ENCODE measurements at regions of chr1 and their contacts with region 1.

Region 1: DNA sequence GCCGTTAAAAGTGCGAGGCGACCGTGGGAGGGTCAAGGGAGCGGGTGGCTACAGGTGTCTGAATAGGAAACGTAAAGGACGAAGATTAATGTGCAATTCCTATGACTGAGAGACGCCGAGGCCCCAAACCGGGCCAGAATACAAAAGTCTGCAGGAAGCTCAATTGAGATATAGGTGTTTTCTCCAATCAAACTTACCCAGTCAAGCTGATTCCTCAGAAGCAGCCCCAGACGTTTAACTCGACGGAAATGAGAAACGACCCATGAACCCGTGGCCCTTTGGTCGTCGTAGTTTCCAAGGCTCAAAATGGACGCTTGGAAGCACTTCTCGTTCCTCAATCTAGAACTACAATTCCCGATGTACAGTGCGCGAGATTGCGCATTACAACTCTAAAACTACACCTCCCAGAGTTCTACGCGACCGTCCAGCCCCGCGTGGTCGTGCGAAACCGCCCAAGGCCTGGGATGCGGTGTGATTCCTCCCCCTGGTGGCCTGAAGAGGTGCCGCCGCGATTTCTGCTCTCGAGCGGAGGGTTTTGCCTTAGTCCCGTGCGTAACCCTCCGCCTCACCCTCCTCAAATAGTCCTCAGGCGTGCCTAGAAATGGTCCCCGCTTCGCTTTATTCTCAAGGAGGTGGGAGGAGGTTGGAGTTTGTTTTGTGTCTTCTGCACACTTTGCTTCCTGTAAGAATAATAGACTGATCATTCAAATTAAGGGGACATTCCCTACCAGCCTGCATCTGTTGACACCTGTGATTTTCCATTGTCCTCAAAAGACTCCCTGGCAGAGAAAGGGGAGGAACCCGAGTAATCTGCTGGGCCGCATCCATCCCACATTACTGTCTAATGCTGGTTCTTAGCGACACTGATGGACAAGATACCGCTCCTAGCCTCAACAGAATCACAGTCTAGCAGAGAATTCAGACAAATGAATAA is at the start of gene PAFAH2:
- DNase-seq: peak; percentile 96 to 99
- ATAC-seq: peak; percentile 99 to 100 (median 100)
- H3K4me3 ChIP-seq: peak within 1 kb of the TSS; percentile 34 to 88 (median 65)
- H3K27ac ChIP-seq: peak within 1 kb of the TSS; percentile 19 to 89 (median 86)
- H3K4me1 ChIP-seq: peaks cover 4 to 31% (median 19%) of the 10 kb centered on the region in 9 donors
- H3K27me3 ChIP-seq: no peaks in the 10 kb centered on the region
- CTCF ChIP-seq: peak; percentile 93 to 99 (median 98)
- total RNA-seq, gene PAFAH2: 7.5 to 19.3 (median 12.4) TPM

Region 2: DNA sequence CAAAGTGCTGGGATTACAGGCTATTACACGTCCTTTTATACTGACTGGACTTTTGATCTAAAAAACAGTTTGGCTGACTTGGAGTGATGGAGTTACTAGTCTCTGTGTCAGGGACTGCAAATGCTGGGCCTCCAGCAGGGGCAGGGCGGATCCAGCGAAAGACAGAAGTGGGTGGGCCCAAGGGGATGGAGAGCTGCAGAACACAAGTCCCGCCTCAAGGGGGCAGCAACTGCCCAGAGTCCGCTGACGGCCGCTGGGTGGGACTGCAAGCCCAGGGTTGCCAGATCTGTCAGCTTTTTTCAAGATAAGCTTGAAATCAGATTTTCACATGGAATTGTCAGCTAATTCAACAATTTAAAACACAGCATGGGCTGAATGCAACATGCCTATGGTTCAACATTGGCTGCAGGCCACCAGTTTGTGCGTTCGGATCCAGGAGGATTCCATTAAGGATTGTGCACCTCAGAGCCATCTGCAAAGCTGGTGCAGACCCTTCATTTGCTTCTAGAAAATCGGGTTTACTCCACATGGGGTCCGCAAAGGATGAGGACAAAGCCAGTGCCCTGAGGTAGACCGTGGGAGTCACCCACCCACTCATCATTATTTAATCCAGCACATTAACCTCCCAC is 102.6 kb before region 1 on chr1:
- intact Hi-C with region 1: loop called (anchors 1 to 5 kb)
- DNase-seq: peak; percentile 90 to 91
- ATAC-seq: peak; percentile 94 to 99 (median 95)
- H3K4me3 ChIP-seq: peak overlapping the region in 3 of 10 donors; percentile 3 to 17 (median 7)
- H3K27ac ChIP-seq: peak overlapping the region in 1 of 10 donors; percentile 31
- H3K4me1 ChIP-seq: peaks cover 0 to 17% (median 9%) of the 10 kb centered on the region in 9 donors
- H3K27me3 ChIP-seq: no peaks in the 10 kb centered on the region
- CTCF ChIP-seq: peak; percentile 97 to 100 (median 99)

Region 3: DNA sequence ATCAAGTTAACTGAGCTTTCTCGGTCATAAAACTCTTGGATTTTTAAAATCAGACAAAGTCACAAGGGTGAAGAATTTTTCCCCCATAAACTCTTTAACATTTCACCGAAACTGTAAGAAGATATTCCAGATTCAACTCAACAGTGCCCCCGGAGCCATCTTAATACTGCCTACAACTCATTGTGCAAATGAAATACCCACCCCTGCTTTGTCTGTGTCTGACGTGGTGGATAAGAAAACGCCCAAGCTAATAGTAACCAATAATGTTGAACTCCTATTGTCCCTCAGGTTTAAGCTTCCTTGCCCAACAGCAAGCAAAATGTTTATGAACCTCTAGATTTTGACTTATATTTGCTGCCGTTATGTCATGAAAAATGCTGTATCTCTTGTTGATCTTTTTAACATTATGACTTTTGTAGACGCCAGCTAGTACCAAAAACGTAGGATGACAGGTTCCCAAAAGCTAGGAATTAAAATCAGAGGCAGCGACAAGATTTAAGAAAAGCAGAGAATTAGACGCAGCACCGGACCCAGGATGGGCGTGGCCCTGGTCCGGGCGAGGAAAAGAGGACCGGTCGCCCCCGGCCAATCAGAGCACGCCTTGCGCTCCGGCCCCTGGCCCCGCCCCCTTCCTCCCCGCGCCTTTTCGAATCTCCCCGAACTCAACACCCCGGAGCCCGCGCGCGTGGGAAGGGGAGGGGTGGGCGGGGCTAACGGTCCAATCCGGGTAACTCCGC is 93.0 kb before region 1 on chr1:
- intact Hi-C with region 1: loop called in 2 of 10 experiments (anchors 2 kb)
- DNase-seq: peak; percentile 95 to 96
- ATAC-seq: peak; percentile 93 to 97 (median 96)
- H3K4me3 ChIP-seq: peak overlapping the region; percentile 53 to 82 (median 70)
- H3K27ac ChIP-seq: peak overlapping the region in 9 of 10 donors; percentile 45 to 77 (median 69)
- H3K4me1 ChIP-seq: peaks cover 9 to 44% (median 28%) of the 10 kb centered on the region in 9 donors
- H3K27me3 ChIP-seq: no peaks in the 10 kb centered on the region
- CTCF ChIP-seq: peak in 1 of 9 donors; percentile 15

Measured in heart right ventricle (tissue), 16 donors.